ENCODE measurements at regions of chr14 and their contacts with region 1.

Region 1: GRCh38 chr14:54001189-54001913 is 44.7 kb upstream of the BMP4 start:
- DNase-seq: no peak
- H3K4me3 ChIP-seq: no peak overlapping the region
- H3K4me3 Mint-ChIP-seq: no peak overlapping the region
- H3K27ac ChIP-seq: no peak overlapping the region
- H3K27ac Mint-ChIP-seq: no peak overlapping the region
- H3K4me1 ChIP-seq: no peaks in the 10 kb centered on the region
- H3K4me1 Mint-ChIP-seq: no peaks in the 10 kb centered on the region
- H3K27me3 ChIP-seq: no peaks in the 10 kb centered on the region
- H3K27me3 Mint-ChIP-seq: no peaks in the 10 kb centered on the region

Region 2: DNA sequence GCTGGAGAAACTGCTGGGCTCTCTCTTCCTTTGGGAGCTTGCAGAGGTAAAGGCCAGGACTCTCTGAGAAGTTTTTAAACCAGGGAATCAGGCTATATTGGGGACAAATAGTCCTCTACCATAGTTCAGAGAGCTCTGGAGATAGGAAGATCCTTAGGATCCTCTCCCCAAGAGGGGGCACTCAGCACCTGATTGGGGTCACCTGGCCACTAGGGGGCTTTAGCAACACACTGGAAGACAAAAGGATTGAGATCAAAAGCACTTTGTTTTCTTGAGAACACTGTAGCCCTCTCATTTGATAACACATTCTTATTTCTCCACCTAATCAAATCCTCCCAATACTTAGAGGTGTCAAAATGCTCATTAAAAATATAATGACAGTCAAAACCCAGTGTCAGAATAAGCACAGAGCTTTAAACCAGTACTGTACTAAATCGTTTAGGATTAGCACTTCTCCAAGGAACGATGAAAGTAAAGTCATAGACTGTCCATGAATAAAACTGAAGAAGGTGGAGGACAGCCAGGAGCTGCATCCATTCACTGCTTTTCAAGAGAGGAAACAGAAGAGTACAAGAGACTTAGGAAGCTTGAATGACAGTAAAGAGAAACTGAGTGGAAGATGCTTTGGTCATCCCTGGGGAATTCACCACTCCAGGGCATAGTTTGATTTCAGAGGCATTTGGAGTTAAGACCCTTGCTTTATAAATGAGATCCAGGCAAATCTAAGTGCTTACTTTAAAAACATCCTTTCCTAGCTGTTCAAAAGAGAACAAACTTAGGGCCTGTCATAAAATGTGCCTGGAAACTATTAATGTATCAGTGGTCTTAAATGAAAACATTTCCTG is 71.3 kb before region 1 on chr14:
- CTCF ChIA-PET with region 1: no interaction called
- POLR2A ChIA-PET with region 1: no interaction called
- intact Hi-C with region 1: loop called (anchors 1 kb)
- DNase-seq: peak in 2 of 5 donors; percentile 8 to 12
- H3K4me3 ChIP-seq: no peak overlapping the region
- H3K4me3 Mint-ChIP-seq: no peak overlapping the region
- H3K27ac ChIP-seq: no peak overlapping the region
- H3K27ac Mint-ChIP-seq: no peak overlapping the region
- H3K4me1 ChIP-seq: no peaks in the 10 kb centered on the region
- H3K4me1 Mint-ChIP-seq: no peaks in the 10 kb centered on the region
- H3K27me3 ChIP-seq: no peaks in the 10 kb centered on the region
- H3K27me3 Mint-ChIP-seq: peaks cover 3 to 8% of the 10 kb centered on the region in 2 donors

Region 3: DNA sequence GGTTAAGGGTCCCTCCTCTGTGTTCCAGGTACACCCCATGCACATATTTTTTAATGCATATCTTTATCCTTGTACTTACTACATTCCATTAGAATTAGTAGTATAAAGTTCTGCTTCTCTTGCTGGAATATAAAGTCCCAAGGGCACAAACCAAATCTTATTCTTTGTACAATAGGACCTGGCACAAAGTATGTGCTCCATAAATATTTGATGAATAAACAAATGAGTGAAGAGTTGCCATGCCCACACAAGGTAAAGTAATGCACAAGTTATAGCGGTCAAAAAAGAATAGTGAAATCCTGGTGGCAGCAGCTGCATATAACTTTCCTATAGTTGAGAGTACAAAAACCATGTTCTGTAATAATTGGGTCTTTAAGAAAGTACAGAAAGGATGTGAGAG is 37.4 kb after region 1 on chr14:
- CTCF ChIA-PET with region 1: no interaction called
- POLR2A ChIA-PET with region 1: no interaction called
- intact Hi-C with region 1: no loop called
- DNase-seq: no peak
- H3K4me3 ChIP-seq: no peak overlapping the region
- H3K4me3 Mint-ChIP-seq: no peak overlapping the region
- H3K27ac ChIP-seq: no peak overlapping the region
- H3K27ac Mint-ChIP-seq: no peak overlapping the region
- H3K4me1 ChIP-seq: no peaks in the 10 kb centered on the region
- H3K4me1 Mint-ChIP-seq: no peaks in the 10 kb centered on the region
- H3K27me3 ChIP-seq: no peaks in the 10 kb centered on the region
- H3K27me3 Mint-ChIP-seq: no peaks in the 10 kb centered on the region